ENCODE measurements at regions of chr17 and their contacts with region 1.

Region 1: GRCh38 chr17:8997994-8998628 is 23.2 kb upstream of the NTN1 start:
- DNase-seq: peak; percentile 89
- ATAC-seq: peak; percentile 73
- H3K4me3 Mint-ChIP-seq: no peak overlapping the region
- H3K27ac Mint-ChIP-seq: no peak overlapping the region
- H3K4me1 Mint-ChIP-seq: peaks cover 9% of the 10 kb centered on the region
- H3K27me3 Mint-ChIP-seq: peaks cover 24% of the 10 kb centered on the region

Region 2: GRCh38 chr17:8785547-8786413 is 212.3 kb before region 1 on chr17:
- CTCF ChIA-PET with region 1: interaction called, 14 read pairs
- POLR2A ChIA-PET with region 1: no interaction called
- intact Hi-C with region 1: loop called in 1 of 2 experiments (anchors 5 kb)
- DNase-seq: peak; percentile 79
- ATAC-seq: peak; percentile 61
- H3K4me3 Mint-ChIP-seq: no peak overlapping the region
- H3K27ac Mint-ChIP-seq: no peak overlapping the region
- H3K4me1 Mint-ChIP-seq: no peaks in the 10 kb centered on the region
- H3K27me3 Mint-ChIP-seq: peaks cover 6% of the 10 kb centered on the region

Region 3: GRCh38 chr17:8910969-8911604 is 87.0 kb before region 1 on chr17:
- CTCF ChIA-PET with region 1: interaction called, 16 read pairs
- POLR2A ChIA-PET with region 1: no interaction called
- intact Hi-C with region 1: no loop called
- DNase-seq: no peak
- ATAC-seq: no peak
- H3K4me3 Mint-ChIP-seq: no peak overlapping the region
- H3K27ac Mint-ChIP-seq: no peak overlapping the region
- H3K4me1 Mint-ChIP-seq: peaks cover 13% of the 10 kb centered on the region
- H3K27me3 Mint-ChIP-seq: no peaks in the 10 kb centered on the region

Region 4: DNA sequence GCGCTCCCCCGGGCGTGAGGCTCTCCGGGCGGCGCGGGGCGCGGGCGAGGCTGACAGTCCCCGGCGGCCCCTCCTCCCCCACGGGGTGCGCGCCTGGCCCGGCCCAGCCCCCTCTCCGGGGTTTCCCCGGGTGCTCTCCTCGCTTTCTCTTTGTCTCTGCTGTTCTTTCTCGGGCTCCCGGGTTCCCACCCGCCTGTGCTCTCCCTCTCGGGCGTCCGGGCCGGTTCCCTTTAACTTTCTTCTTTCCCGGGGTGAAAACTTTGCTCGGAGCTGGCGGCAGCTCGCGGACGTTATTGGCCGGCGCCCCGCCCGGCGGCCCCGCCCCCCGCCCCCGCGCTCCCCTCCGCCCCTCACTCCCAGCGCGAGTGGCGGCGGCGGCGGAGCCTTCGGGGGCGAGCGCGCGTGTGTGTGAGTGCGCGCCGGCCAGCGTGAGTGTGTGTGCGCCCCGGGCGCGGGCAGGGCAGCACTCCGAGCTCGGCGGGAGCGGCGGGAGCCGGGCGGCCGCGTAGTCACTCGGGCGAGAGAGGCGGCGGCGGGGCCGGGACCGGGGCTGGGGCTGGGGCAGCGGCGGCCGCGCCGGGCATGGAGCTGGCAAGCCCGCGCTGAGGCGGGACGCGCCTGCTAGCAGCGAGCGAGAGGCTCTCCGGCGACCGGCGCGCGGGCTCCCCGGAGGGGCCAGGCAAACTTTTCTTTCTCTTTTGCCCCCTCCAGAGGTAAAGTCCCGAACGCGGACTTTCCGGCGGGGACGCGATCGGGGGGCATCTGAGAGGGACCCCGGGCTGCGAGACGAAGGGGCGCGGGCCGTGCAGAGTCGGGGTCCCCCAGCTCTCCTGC is 23.3 kb after region 1 on chr17 and contains the start of gene NTN1:
- CTCF ChIA-PET with region 1: interaction called, 12 read pairs
- POLR2A ChIA-PET with region 1: no interaction called
- intact Hi-C with region 1: loop called in 1 of 2 experiments (anchors 1 kb)
- DNase-seq: peak; percentile 82
- ATAC-seq: peak; percentile 89
- H3K4me3 Mint-ChIP-seq: peak within 1 kb of the TSS; percentile 77
- H3K27ac Mint-ChIP-seq: no peak within 1 kb of the TSS
- H3K4me1 Mint-ChIP-seq: peaks cover 6% of the 10 kb centered on the region
- H3K27me3 Mint-ChIP-seq: peaks cover 48% of the 10 kb centered on the region
- total RNA-seq, gene NTN1: 0.60 to 0.71 TPM

Measured in activated CD4-positive, alpha-beta T cell treated with anti-CD3 and anti-CD28 coated beads for 36 hours (primary cell).